Panc1 (cell line): ENCODE measurements at regions of chr3 and their contacts with region 1.

Region 1: DNA sequence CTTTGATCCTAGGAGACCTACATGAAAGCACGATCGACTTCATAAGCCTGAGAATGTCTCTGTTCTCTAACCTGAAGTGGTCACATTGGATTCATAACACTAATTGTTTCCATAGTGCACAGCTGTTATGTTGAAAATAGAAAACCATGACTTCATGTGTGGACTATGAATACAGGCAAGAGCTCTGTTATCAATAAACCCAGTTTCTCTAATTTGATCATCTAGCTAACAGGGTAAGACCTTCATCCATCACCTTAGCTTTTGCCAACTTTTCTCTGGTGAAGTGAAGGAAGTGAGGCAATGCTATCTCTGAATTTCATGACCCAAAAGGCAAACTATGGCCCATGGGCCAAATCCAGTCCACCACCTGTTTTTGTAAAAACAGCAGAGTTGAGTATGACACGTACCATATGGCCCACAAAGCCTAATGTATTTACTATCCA is 27.2 kb downstream of the ABI3BP start:
- DNase-seq: no peak
- ATAC-seq: no peak
- H3K4me3 ChIP-seq: no peak overlapping the region
- H3K27ac ChIP-seq: no peak overlapping the region
- H3K4me1 ChIP-seq: no peaks in the 10 kb centered on the region
- H3K27me3 ChIP-seq: no peaks in the 10 kb centered on the region
- CTCF ChIP-seq: no peak

Region 2: GRCh38 chr3:100947119-100947518 is 19.0 kb before region 1 on chr3:
- CTCF ChIA-PET with region 1: interaction called, 10 read pairs
- POLR2A ChIA-PET with region 1: no interaction called
- in situ Hi-C with region 1: no loop called
- intact Hi-C with region 1: no loop called
- DNase-seq: no peak
- ATAC-seq: no peak
- H3K4me3 ChIP-seq: no peak overlapping the region
- H3K27ac ChIP-seq: no peak overlapping the region
- H3K4me1 ChIP-seq: no peaks in the 10 kb centered on the region
- H3K27me3 ChIP-seq: no peaks in the 10 kb centered on the region
- CTCF ChIP-seq: no peak

Region 3: GRCh38 chr3:102553876-102554275 is 1587.8 kb after region 1 on chr3:
- CTCF ChIA-PET with region 1: no interaction called
- POLR2A ChIA-PET with region 1: no interaction called
- in situ Hi-C with region 1: no loop called
- intact Hi-C with region 1: no loop called
- DNase-seq: no peak
- ATAC-seq: no peak
- H3K4me3 ChIP-seq: no peak overlapping the region
- H3K27ac ChIP-seq: no peak overlapping the region
- H3K4me1 ChIP-seq: no peaks in the 10 kb centered on the region
- H3K27me3 ChIP-seq: no peaks in the 10 kb centered on the region
- CTCF ChIP-seq: no peak